ENCODE measurements at regions of chr3 and their contacts with region 1.

Region 1: GRCh38 chr3:101868534-101869464 is 19.5 kb downstream of the NFKBIZ start:
- DNase-seq: no peak
- H3K4me3 ChIP-seq: no peak overlapping the region
- H3K27ac ChIP-seq: no peak overlapping the region
- H3K4me1 ChIP-seq: peaks cover 7% of the 10 kb centered on the region
- H3K27me3 ChIP-seq: no peaks in the 10 kb centered on the region
- CTCF ChIP-seq: no peak

Region 2: GRCh38 chr3:101819758-101820157 is 49.0 kb before region 1 on chr3:
- CTCF ChIA-PET with region 1: no interaction called
- dilution Hi-C with region 1: loop called (anchors 5 kb)
- in situ Hi-C with region 1: no loop called
- intact Hi-C with region 1: no loop called
- DNase-seq: no peak
- H3K4me3 ChIP-seq: no peak overlapping the region
- H3K27ac ChIP-seq: no peak overlapping the region
- H3K4me1 ChIP-seq: peaks cover 11% of the 10 kb centered on the region
- H3K27me3 ChIP-seq: no peaks in the 10 kb centered on the region
- CTCF ChIP-seq: no peak

Region 3: DNA sequence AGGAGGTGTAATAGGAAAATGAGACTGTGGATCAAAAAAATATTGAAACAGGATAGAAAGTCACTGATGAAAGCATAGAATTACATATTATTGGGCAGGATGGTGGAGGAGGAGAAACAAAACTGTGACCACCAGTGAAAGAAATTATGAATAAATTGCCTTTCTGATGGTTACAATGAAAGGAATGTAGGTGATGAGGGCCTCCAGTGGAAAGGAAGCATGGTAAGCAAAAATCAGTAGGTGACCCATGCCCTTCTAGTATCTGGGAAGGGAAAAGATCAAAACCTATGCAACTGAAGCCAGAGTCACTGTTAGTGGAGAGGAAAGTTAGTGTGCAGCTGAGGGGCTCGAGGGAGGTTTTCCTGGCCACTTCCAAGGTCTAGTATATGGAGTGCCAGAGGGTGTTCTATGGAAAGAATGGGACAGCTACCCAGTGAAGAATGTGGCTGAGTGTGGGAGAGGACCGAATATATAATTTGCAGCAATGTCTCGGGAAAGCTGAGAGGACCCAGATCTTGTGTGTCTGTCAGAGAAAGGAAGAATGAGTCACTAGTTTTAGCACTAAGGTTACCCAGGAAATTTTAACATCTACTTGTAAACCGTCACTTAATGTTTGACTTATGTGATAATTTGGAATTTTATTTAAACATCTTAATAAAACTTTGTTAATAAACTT is 126.7 kb after region 1 on chr3:
- CTCF ChIA-PET with region 1: no interaction called
- dilution Hi-C with region 1: no loop called
- in situ Hi-C with region 1: no loop called
- intact Hi-C with region 1: loop called (anchors 1 kb)
- DNase-seq: no peak
- H3K4me3 ChIP-seq: no peak overlapping the region
- H3K27ac ChIP-seq: no peak overlapping the region
- H3K4me1 ChIP-seq: peaks cover 30% of the 10 kb centered on the region
- H3K27me3 ChIP-seq: no peaks in the 10 kb centered on the region
- CTCF ChIP-seq: no peak

Region 4: DNA sequence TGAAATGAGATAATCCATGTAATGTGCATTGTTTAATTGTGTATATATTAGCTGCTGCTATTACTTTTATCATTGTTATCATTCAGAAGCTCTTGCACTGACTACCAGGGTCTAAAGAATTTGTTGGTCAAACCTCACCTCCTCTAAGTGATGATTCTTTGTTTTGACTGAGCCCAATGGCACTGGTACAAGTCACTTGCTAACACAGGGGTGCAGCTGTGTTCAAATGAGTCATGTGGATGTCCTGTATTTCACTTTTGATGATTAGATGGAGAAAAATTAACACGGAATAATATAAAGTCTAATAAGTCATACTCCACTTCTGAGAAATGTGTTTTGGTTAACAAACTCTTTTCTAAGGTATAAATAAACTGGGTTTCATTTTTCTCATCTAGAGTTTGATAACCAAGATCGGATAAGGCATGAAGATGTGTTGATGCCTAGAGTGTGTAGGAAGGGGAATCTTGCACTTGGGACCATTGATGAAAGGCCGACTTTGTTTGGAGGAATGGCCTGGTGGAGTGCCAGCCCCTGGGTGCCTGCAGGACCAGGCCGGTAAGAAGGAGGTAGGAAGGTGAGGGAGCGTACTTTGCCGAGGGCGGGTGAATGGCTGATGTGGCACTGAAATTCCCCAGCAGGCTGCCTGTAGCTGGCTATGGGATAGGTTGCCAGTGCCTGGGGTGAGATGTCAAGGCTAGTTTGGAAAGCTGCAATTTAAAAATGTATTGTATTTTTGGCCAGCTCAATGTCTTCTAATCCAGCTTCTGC is 321.3 kb after region 1 on chr3:
- CTCF ChIA-PET with region 1: no interaction called
- dilution Hi-C with region 1: loop called (anchors 25 kb)
- in situ Hi-C with region 1: loop called in 1 of 2 experiments (anchors 10 kb)
- intact Hi-C with region 1: loop called (anchors 1 kb)
- DNase-seq: peak; percentile 83
- H3K4me3 ChIP-seq: peak overlapping the region; percentile 5 to 22 (median 10)
- H3K27ac ChIP-seq: peak overlapping the region; percentile 94
- H3K4me1 ChIP-seq: peaks cover 67% of the 10 kb centered on the region
- H3K27me3 ChIP-seq: no peaks in the 10 kb centered on the region
- CTCF ChIP-seq: peak in 1 of 2 donors; percentile 7

Region 5: DNA sequence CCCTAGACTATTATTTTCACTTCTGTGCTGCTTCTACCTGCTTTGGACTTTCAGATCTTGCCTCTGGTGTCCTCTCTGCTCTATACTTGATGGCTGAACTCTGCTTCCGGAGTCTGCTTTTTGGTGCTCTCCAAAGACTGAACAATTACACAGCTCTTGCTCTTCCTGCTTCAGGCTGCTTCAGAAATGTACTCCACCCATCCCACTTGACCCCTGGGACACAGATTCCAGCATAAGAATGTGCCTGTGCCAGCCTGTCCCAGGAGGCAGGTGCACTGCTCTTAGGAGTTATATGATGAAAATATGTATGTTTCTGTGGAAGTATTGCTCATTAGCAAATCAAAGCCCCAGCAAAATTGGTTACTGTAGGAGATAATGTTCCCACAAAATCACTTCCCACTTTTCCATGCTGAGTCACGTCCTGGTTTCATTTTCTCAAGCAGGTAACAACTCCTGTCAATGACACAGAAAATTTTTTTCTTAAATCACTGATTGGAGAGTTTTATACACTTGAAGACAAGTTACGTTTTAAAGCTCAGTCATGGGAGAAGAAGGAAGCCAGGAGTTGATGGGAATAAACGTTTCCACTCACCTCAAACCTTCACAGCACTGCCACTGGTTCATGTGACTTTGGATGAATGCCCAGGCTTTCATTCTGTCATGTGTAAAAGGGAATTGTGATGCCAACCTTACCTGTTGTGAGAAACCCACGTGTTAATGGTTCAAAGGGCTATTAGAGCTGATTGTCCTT is 326.6 kb after region 1 on chr3:
- CTCF ChIA-PET with region 1: no interaction called
- dilution Hi-C with region 1: loop called (anchors 25 kb)
- in situ Hi-C with region 1: loop called in 1 of 2 experiments (anchors 10 kb)
- intact Hi-C with region 1: loop called (anchors 1 kb)
- DNase-seq: peak; percentile 96
- H3K4me3 ChIP-seq: no peak overlapping the region
- H3K27ac ChIP-seq: peak overlapping the region; percentile 94
- H3K4me1 ChIP-seq: peaks cover 62% of the 10 kb centered on the region
- H3K27me3 ChIP-seq: no peaks in the 10 kb centered on the region
- CTCF ChIP-seq: no peak

Measured in mammary epithelial cell (primary cell).